Heart left ventricle (tissue), 16 donors: ENCODE measurements at regions of chr4 and their contacts with region 1.

Region 1: DNA sequence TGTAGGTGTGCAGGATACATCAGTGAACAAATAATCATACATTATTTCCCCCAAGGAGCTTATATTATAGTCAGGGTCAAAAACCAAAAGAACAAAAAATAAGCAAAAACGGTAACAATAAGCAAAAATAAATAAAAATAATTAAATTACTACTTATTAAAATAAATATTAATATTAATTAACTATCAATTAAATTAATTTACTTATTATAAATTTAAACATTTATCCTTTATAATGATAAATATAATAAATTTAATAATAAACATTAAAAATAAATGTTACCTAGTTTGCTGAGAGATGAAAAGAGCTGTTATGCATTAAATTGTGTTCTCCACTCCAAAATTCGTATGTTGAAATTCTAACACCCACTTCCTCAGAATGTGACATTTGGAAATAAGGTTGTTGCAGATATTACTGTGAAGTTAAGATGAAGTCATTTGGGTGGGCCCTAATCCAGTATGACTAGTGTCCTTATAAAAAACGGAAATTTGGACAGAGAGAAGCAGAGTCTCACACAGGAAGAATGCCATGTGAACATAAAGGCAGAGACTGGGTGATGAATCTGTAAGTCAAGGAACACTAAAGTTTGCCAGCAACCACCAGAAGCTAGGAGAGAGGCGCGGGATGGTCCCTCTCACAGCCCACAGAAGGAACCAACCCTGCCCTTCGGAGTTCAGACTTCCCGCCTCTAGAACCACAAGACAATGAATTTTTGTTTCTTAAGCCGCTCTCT is 67.2 kb upstream of the IBSP start:
- DNase-seq: no peak
- ATAC-seq: peak in 2 of 4 donors; percentile 74
- H3K4me3 ChIP-seq: no peak overlapping the region
- H3K27ac ChIP-seq: no peak overlapping the region
- H3K4me1 ChIP-seq: peaks cover 0 to 10% (median 0%) of the 10 kb centered on the region in 12 donors
- H3K27me3 ChIP-seq: peaks cover 0 to 3% (median 0%) of the 10 kb centered on the region in 9 donors
- CTCF ChIP-seq: no peak
- POLR2A ChIP-seq: no peak

Region 2: GRCh38 chr4:87521757-87522374 is 210.3 kb before region 1 on chr4:
- intact Hi-C with region 1: no loop called
- DNase-seq: no peak
- ATAC-seq: peak; percentile 34 to 65 (median 46)
- H3K4me3 ChIP-seq: peak overlapping the region in 5 of 12 donors; percentile 2 to 61 (median 21)
- H3K27ac ChIP-seq: peak overlapping the region; percentile 32 to 91 (median 84)
- H3K4me1 ChIP-seq: peaks cover 0 to 81% (median 52%) of the 10 kb centered on the region in 12 donors
- H3K27me3 ChIP-seq: no peaks in the 10 kb centered on the region
- CTCF ChIP-seq: no peak
- POLR2A ChIP-seq: peak in 1 of 2 donors; percentile 16

Region 3: GRCh38 chr4:87698394-87698793 is 33.8 kb before region 1 on chr4:
- intact Hi-C with region 1: loop called in 1 of 10 experiments (anchors 1 kb)
- DNase-seq: no peak
- ATAC-seq: no peak
- H3K4me3 ChIP-seq: no peak overlapping the region
- H3K27ac ChIP-seq: no peak overlapping the region
- H3K4me1 ChIP-seq: no peaks in the 10 kb centered on the region
- H3K27me3 ChIP-seq: no peaks in the 10 kb centered on the region
- CTCF ChIP-seq: no peak
- POLR2A ChIP-seq: no peak